Activated CD4-positive, alpha-beta T cell treated with anti-CD3 and anti-CD28 coated beads, Interleukin-2, amount 10 ng/mL, durations not matched to agents 24 days and 14 days (primary cell): ENCODE measurements at regions of chrX and their contacts with region 1.

Region 1: DNA sequence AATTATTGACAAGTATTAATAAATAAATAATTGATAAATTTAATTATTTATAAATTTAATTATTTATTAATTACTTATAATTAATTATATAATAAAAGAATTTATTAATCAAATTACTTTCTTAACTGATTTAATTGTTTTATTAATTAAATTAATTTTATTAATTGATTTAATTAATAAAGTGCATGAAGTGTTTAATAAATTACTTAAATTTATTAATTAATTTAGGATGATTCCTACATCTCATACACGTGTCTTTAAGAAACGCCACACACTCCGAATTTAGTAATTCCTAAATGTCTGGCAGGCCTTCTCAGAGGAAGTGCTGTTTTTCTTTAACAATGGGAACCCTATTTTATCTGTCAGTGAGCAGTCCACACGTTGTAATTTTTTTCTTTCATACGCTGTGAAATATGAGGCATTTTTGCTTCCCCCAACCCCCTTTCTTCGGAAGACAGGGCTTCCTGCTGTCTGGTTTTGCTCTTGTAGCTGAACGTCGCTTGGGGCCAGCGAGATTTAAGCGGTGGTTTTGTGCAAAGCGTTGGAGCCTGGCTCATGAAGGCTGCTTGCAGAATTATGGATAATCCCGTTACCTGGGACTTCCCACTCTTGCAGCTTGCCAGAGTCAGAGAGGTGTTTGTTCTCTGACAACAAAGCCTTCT is 46.8 kb downstream of the CRLF2 start:
- DNase-seq: peak; percentile 78
- H3K4me3 Mint-ChIP-seq: peak overlapping the region; percentile 48
- H3K27ac Mint-ChIP-seq: no peak overlapping the region
- H3K4me1 Mint-ChIP-seq: peaks cover 20% of the 10 kb centered on the region
- H3K27me3 Mint-ChIP-seq: peaks cover 9% of the 10 kb centered on the region

Region 2: DNA sequence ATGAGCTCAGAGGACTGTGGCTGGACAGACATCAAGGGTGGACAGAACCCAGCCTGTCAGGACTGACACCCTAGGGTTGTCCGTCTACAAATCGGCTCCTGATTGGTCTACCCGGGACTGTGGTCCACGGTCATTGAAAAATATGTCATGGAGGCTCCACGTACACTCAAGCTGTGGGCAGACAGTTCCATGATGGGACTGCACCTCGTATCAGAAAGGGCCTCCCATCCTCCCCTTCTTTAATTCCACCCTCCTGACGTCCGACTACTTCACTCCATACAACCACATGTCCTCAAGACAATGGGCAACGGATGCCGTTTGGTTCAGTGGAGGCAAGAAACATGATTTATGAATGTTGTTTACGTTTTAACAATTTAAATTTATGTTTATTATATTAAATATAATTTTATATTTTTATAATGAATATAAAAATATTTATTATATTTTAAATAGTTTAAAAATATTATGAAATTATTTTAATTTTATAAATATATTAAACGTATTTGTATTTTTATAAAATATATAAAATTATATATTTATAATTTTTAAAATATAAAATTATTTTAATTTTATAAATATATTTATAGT is 593.0 kb before region 1 on chrX:
- intact Hi-C with region 1: loop called (anchors 5 kb)
- DNase-seq: no peak
- H3K4me3 Mint-ChIP-seq: no peak overlapping the region
- H3K27ac Mint-ChIP-seq: no peak overlapping the region
- H3K4me1 Mint-ChIP-seq: no peaks in the 10 kb centered on the region
- H3K27me3 Mint-ChIP-seq: no peaks in the 10 kb centered on the region

Region 3: DNA sequence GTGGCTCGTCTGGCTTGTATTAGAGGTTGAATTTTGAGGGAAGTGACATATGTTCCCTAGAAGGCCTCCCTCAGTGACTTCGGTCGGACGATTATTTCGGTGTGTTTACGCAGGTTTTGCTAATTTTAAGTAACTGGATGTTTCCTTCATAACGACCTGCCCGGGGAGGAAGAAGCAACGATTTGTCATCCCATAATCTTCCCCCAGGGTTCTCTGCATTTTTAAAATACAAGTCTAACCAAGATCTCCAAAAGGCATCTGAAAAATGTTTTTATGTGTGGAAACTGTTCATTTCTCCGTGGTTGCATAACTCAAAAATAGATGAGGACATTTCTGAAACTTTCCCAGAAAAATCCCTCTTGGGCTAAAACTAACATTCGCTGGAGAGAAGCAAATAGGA is 339.7 kb before region 1 on chrX:
- intact Hi-C with region 1: no loop called
- DNase-seq: peak; percentile 26
- H3K4me3 Mint-ChIP-seq: no peak overlapping the region
- H3K27ac Mint-ChIP-seq: no peak overlapping the region
- H3K4me1 Mint-ChIP-seq: no peaks in the 10 kb centered on the region
- H3K27me3 Mint-ChIP-seq: no peaks in the 10 kb centered on the region

Region 4: GRCh38 chrX:915427-916229 is 250.0 kb before region 1 on chrX:
- intact Hi-C with region 1: loop called (anchors 10 kb)
- DNase-seq: peak; percentile 78
- H3K4me3 Mint-ChIP-seq: no peak overlapping the region
- H3K27ac Mint-ChIP-seq: no peak overlapping the region
- H3K4me1 Mint-ChIP-seq: no peaks in the 10 kb centered on the region
- H3K27me3 Mint-ChIP-seq: no peaks in the 10 kb centered on the region

Region 5: GRCh38 chrX:997631-998137 is 168.0 kb before region 1 on chrX:
- intact Hi-C with region 1: no loop called
- DNase-seq: no peak
- H3K4me3 Mint-ChIP-seq: no peak overlapping the region
- H3K27ac Mint-ChIP-seq: no peak overlapping the region
- H3K4me1 Mint-ChIP-seq: no peaks in the 10 kb centered on the region
- H3K27me3 Mint-ChIP-seq: no peaks in the 10 kb centered on the region

Region 6: DNA sequence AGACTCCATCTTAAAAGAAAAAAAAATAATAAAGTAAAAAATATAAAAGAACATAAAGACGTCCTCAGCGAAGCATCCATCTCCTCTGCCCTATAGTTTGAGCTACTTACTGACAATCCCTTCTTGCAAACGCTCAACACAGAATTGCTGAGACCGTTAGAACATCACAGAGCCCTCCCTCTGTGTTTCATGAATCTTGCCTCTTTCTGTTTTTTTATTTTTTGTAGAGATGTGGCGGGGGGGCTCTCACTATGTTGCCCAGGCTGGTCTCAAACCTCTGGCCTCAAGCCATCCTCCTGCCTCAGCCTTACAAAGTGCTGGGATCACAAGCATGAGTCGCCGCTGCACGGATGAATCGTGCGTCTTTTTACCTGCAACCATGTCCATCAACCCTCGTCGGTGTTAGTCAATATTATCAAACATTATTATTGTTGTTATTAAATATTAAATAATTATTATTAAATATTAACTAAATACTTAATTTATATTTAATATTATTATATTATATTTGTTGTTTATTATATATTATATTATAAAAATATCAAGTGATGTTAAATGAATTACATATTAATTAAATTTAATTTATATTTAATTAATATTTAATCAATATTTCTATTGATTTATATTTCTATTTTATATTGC is 153.9 kb before region 1 on chrX:
- intact Hi-C with region 1: loop called (anchors 5 kb)
- DNase-seq: no peak
- H3K4me3 Mint-ChIP-seq: no peak overlapping the region
- H3K27ac Mint-ChIP-seq: no peak overlapping the region
- H3K4me1 Mint-ChIP-seq: no peaks in the 10 kb centered on the region
- H3K27me3 Mint-ChIP-seq: no peaks in the 10 kb centered on the region

Region 7: DNA sequence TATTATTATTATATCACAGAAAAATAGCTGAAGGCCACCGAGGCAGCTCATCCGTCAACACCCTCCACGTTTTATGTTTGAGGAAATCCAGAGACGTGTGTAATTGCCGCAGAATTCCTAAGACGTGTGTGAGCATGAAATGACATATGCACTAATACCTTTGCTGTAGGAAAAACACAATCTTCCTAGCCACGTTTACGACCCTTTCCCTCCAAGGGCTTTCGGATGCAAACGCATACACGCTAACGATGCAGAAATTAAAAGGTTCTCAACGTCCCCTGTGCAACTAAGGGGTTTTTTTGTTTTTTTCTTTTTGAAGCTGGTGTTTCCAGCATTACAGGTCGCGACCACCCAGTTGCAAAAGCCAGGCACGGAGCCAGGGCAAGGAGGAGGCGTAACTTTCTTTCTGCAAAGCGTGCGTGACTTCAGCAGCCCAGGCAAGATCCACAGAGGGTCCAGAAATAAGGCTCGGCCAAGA is 13.0 kb after region 1 on chrX:
- intact Hi-C with region 1: loop called (anchors 2 kb)
- DNase-seq: peak; percentile 71
- H3K4me3 Mint-ChIP-seq: no peak overlapping the region
- H3K27ac Mint-ChIP-seq: no peak overlapping the region
- H3K4me1 Mint-ChIP-seq: no peaks in the 10 kb centered on the region
- H3K27me3 Mint-ChIP-seq: no peaks in the 10 kb centered on the region

Region 8: DNA sequence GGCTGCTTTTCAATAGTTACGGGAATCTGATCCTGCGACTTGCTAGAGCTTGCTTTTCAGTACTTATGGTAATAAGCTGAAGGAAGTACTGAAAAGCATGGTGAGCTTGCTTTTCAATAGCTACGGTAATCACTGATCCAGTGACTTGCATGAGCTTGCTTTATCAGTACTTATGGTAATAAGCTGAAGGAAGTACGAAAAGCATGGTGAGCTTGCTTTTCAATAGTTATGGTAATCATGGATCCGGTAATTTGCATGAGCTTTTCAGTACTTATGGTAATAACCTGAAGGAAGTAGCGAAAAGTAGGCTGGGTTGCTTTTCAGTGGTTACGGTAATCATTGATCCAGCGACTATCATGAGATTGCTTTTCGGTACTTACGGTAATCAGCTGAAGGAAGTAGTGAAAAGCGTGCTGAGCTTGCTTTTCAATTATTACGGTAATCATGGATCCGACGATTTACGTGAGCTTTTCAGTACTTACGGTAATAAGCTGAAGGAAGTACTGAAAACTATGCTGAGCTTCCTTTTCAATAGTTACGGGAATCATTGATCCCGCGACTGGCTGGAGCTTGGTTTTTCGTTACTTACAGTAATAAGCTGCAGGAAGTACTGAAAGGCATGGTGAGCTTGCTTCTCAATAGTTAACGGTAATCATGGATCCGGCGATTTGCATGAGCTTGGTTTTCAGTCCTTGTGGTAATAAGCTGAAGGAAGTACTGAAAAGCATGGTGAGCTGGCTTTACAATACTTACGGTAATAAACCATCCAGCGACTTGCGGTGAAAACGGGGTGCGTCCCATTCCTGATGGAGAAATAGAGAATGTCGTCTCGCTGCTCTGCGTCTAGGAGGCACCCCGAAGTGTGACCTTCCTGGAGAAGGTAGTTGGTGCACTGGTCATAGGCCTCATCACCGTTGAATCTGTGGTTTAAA is 40.3 kb after region 1 on chrX:
- intact Hi-C with region 1: loop called (anchors 5 kb)
- DNase-seq: peak; percentile 82
- H3K4me3 Mint-ChIP-seq: peak overlapping the region; percentile 77
- H3K27ac Mint-ChIP-seq: peak overlapping the region; percentile 35
- H3K4me1 Mint-ChIP-seq: peaks cover 33% of the 10 kb centered on the region
- H3K27me3 Mint-ChIP-seq: peaks cover 2% of the 10 kb centered on the region